B cell (primary cell): ENCODE measurements at regions of chr3 and their contacts with region 1.

Region 1: GRCh38 chr3:186930641-186931531 is 560 bp downstream of the ST6GAL1 start:
- DNase-seq: peak; percentile 89
- ATAC-seq: peak; percentile 84
- H3K4me3 ChIP-seq: peak overlapping the region; percentile 84 to 94 (median 91)
- H3K4me3 Mint-ChIP-seq: peak overlapping the region; percentile 100
- H3K27ac ChIP-seq: peak overlapping the region; percentile 79 to 83
- H3K27ac Mint-ChIP-seq: peak overlapping the region; percentile 98
- H3K4me1 ChIP-seq: peaks cover 26 to 40% of the 10 kb centered on the region in 2 donors
- H3K4me1 Mint-ChIP-seq: peaks cover 58% of the 10 kb centered on the region
- H3K27me3 ChIP-seq: no peaks in the 10 kb centered on the region
- H3K27me3 Mint-ChIP-seq: no peaks in the 10 kb centered on the region
- CTCF ChIP-seq: peak; percentile 47

Region 2: DNA sequence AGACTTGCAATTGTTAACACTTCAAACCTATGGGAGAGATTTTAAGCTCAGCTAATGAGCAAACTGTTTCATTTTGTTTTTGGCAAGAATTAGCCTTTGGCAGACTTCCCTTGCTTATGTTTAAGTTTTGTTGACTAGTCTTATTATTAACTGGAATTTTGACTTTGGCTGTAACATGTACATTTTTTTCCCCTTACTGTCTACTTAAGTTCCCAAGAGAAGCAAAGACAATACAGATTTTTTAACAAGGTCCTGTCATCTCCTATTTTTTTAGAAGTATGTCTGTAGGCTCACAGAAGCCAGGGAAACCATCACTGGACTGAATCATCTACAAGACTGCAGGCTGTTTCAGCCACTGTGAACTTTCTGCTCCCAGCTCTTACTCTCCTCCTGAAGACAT is 643.2 kb before region 1 on chr3:
- CTCF ChIA-PET with region 1: no interaction called
- POLR2A ChIA-PET with region 1: no interaction called
- intact Hi-C with region 1: no loop called
- DNase-seq: no peak
- ATAC-seq: no peak
- H3K4me3 ChIP-seq: no peak overlapping the region
- H3K4me3 Mint-ChIP-seq: no peak overlapping the region
- H3K27ac ChIP-seq: no peak overlapping the region
- H3K27ac Mint-ChIP-seq: no peak overlapping the region
- H3K4me1 ChIP-seq: no peaks in the 10 kb centered on the region
- H3K4me1 Mint-ChIP-seq: no peaks in the 10 kb centered on the region
- H3K27me3 ChIP-seq: no peaks in the 10 kb centered on the region
- H3K27me3 Mint-ChIP-seq: no peaks in the 10 kb centered on the region
- CTCF ChIP-seq: no peak

Region 3: GRCh38 chr3:186760141-186760813 is 170.6 kb before region 1 on chr3:
- CTCF ChIA-PET with region 1: no interaction called
- POLR2A ChIA-PET with region 1: no interaction called
- intact Hi-C with region 1: no loop called
- DNase-seq: no peak
- ATAC-seq: no peak
- H3K4me3 ChIP-seq: no peak overlapping the region
- H3K4me3 Mint-ChIP-seq: no peak overlapping the region
- H3K27ac ChIP-seq: no peak overlapping the region
- H3K27ac Mint-ChIP-seq: no peak overlapping the region
- H3K4me1 ChIP-seq: no peaks in the 10 kb centered on the region
- H3K4me1 Mint-ChIP-seq: no peaks in the 10 kb centered on the region
- H3K27me3 ChIP-seq: no peaks in the 10 kb centered on the region
- H3K27me3 Mint-ChIP-seq: peaks cover 7% of the 10 kb centered on the region
- CTCF ChIP-seq: no peak

Region 4: DNA sequence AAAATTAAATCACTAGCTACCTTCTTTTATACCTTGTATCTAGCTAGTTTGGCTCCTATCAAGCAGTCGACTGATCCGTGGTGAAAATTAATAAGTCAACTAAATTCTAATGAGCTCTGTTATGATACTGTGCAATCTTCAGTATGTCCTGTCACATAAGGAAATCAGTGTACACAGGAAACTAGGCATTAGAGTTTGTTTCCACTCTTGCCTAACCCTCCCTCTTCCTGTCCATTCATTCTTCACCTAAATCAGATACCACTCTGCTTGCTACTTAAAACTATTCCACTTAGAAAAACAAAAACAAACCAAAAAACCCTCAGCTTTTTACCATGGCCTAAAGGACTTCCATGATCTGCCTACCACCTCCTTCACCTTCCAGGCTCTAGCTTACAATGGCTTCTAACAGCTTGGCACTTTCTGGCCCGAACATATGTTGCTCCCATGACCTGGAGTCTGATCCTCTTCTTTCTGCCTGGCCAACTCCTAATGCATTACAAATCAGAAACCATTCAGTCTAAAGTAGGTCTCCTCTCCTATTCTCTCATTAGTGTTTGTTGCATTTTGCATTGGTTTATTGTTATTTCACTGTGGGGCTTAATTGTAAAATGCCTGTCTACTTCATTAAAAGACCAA is 132.5 kb before region 1 on chr3:
- CTCF ChIA-PET with region 1: no interaction called
- POLR2A ChIA-PET with region 1: no interaction called
- intact Hi-C with region 1: no loop called
- DNase-seq: no peak
- ATAC-seq: no peak
- H3K4me3 ChIP-seq: no peak overlapping the region
- H3K4me3 Mint-ChIP-seq: no peak overlapping the region
- H3K27ac ChIP-seq: no peak overlapping the region
- H3K27ac Mint-ChIP-seq: no peak overlapping the region
- H3K4me1 ChIP-seq: no peaks in the 10 kb centered on the region
- H3K4me1 Mint-ChIP-seq: peaks cover 5% of the 10 kb centered on the region
- H3K27me3 ChIP-seq: no peaks in the 10 kb centered on the region
- H3K27me3 Mint-ChIP-seq: no peaks in the 10 kb centered on the region
- CTCF ChIP-seq: no peak

Region 5: DNA sequence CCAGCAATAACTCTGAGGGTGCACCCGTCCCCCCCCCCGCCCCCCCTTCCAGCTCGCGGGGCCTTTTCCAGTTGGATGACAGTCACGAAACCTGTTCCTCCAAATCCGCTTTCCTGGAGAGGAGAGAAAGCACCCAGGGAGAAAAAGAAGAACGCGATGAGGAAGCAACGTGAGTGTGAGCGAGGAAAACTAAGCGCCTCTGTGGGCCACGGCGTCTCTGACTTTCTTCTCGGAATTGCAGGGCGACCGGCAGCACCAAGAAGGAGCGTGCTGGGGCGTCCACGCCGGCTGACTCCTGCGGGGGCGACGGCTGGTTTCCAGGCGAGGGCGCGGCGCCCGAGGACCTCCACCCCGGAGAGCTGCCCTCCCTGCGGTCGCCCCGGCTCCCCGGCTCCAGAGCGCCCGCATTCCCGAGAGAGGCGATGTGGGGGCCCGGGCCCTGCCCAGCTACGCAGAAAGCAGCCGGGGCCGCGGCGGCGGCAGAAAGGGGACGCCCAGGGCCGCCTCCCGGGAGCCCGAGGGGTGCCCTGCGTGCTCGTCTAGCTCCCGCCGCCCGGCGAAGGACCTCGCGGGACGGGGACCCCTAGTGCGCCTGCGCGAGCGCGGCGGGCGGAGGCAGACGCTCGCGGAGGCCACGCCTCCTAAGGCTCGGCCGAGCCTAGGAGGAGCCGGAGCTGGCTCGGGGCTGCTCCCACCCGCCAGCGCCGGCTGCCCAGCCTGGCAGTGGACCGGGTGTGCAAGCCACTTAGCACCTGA is 103.7 kb before region 1 on chr3:
- CTCF ChIA-PET with region 1: interaction called, 5 read pairs
- POLR2A ChIA-PET with region 1: interaction called, 8 read pairs
- intact Hi-C with region 1: loop called (anchors 2 kb)
- DNase-seq: peak; percentile 92
- ATAC-seq: peak; percentile 95
- H3K4me3 ChIP-seq: peak overlapping the region in 4 of 5 experiments; percentile 57 to 78 (median 70)
- H3K4me3 Mint-ChIP-seq: peak overlapping the region; percentile 79
- H3K27ac ChIP-seq: peak overlapping the region in 1 of 2 donors; percentile 55
- H3K27ac Mint-ChIP-seq: peak overlapping the region; percentile 41
- H3K4me1 ChIP-seq: peaks cover 24 to 28% of the 10 kb centered on the region in 2 donors
- H3K4me1 Mint-ChIP-seq: peaks cover 21% of the 10 kb centered on the region
- H3K27me3 ChIP-seq: peaks cover 0 to 69% (median 42%) of the 10 kb centered on the region in 4 experiments
- H3K27me3 Mint-ChIP-seq: peaks cover 54% of the 10 kb centered on the region
- CTCF ChIP-seq: no peak

Region 6: DNA sequence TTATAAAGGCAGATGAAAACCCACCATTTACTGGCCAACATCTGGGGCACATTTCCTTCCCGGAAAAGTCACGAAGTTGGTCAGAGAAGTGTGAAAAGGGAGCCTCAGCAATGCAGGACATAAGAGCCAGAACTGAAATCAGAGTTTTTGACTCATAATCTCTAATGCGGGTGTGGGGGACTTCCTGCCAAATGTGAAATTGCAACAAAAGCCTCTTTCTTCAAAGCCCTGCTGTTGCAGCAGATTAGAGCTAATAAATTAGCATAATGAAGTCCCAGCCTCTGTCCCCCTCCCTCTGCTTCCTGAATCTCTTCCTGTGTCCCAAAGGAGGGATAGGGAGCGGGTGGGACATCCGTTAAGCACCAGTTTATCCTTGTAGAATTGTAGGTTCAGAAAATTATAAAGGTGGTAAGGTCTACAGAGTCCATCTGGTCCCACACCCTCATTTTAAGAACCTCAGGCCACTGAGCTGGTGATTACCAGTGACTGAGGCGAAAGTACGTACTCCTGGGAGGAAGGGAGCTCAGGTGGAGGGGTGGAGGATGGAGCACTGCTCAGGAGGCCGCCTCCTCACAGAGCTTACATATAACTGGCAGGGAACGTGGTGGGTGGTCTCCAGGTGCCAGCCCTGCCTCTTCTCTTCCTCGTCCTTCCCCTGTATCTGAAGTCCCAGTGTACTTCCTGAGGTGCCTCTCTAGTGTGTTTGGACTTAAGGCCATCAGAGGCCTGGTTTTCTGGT is 34.4 kb after region 1 on chr3:
- CTCF ChIA-PET with region 1: interaction called, 5 read pairs
- POLR2A ChIA-PET with region 1: no interaction called
- intact Hi-C with region 1: loop called (anchors 5 kb)
- DNase-seq: no peak
- ATAC-seq: no peak
- H3K4me3 ChIP-seq: no peak overlapping the region
- H3K4me3 Mint-ChIP-seq: no peak overlapping the region
- H3K27ac ChIP-seq: peak overlapping the region in 1 of 2 donors; percentile 9
- H3K27ac Mint-ChIP-seq: peak overlapping the region; percentile 61
- H3K4me1 ChIP-seq: peaks cover 15 to 31% of the 10 kb centered on the region in 2 donors
- H3K4me1 Mint-ChIP-seq: peaks cover 59% of the 10 kb centered on the region
- H3K27me3 ChIP-seq: no peaks in the 10 kb centered on the region
- H3K27me3 Mint-ChIP-seq: no peaks in the 10 kb centered on the region
- CTCF ChIP-seq: no peak

Region 7: GRCh38 chr3:187025656-187026316 is 94.9 kb after region 1 on chr3:
- CTCF ChIA-PET with region 1: interaction called, 12 read pairs
- POLR2A ChIA-PET with region 1: interaction called, 14 read pairs
- intact Hi-C with region 1: no loop called
- DNase-seq: peak; percentile 55
- ATAC-seq: peak; percentile 37
- H3K4me3 ChIP-seq: peak overlapping the region; percentile 19 to 65 (median 42)
- H3K4me3 Mint-ChIP-seq: peak overlapping the region; percentile 89
- H3K27ac ChIP-seq: peak overlapping the region; percentile 86 to 87
- H3K27ac Mint-ChIP-seq: peak overlapping the region; percentile 90
- H3K4me1 ChIP-seq: peaks cover 84 to 92% of the 10 kb centered on the region in 2 donors
- H3K4me1 Mint-ChIP-seq: peaks cover 76% of the 10 kb centered on the region
- H3K27me3 ChIP-seq: no peaks in the 10 kb centered on the region
- H3K27me3 Mint-ChIP-seq: no peaks in the 10 kb centered on the region
- CTCF ChIP-seq: no peak

Region 8: GRCh38 chr3:187112934-187113793 is 182.3 kb after region 1 on chr3:
- CTCF ChIA-PET with region 1: interaction called, 16 read pairs
- POLR2A ChIA-PET with region 1: no interaction called
- intact Hi-C with region 1: no loop called
- DNase-seq: peak; percentile 69
- ATAC-seq: peak; percentile 45
- H3K4me3 ChIP-seq: no peak overlapping the region
- H3K4me3 Mint-ChIP-seq: no peak overlapping the region
- H3K27ac ChIP-seq: no peak overlapping the region
- H3K27ac Mint-ChIP-seq: peak overlapping the region; percentile 42
- H3K4me1 ChIP-seq: peaks cover 3 to 5% of the 10 kb centered on the region in 2 donors
- H3K4me1 Mint-ChIP-seq: peaks cover 6% of the 10 kb centered on the region
- H3K27me3 ChIP-seq: no peaks in the 10 kb centered on the region
- H3K27me3 Mint-ChIP-seq: no peaks in the 10 kb centered on the region
- CTCF ChIP-seq: peak; percentile 88

Region 9: DNA sequence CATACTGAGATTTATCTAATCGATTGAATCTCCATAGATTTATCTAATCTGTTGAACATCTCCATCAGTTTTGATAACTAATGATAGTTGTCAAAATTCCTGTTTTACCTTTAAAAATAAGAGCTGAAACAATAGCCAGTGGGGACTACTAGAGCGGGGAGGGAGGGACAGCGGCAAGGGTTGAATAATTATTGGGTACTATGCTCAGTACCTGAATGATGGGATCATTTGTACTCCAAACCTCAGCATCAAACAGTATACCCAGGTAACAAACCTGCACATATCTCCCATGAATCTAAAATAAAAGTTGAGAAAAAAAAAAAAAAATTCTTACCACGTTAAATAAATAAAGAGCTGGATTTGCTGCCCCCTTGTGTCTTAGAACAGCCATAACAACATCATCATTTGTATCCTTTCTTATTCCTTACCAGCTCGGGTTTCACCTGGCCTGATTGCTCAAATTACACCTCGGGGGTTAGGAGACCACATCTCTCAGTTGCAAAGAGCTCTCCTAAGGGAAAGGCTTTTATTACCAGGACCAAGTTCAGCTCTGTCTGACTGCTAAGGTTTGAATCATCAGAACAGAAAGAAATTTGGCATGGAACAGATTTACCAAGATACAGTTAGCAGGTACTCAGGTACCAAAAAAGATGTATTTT is 234.1 kb after region 1 on chr3:
- CTCF ChIA-PET with region 1: interaction called, 15 read pairs
- POLR2A ChIA-PET with region 1: interaction called, 3 read pairs
- intact Hi-C with region 1: no loop called
- DNase-seq: peak; percentile 81
- ATAC-seq: peak; percentile 72
- H3K4me3 ChIP-seq: no peak overlapping the region
- H3K4me3 Mint-ChIP-seq: no peak overlapping the region
- H3K27ac ChIP-seq: no peak overlapping the region
- H3K27ac Mint-ChIP-seq: no peak overlapping the region
- H3K4me1 ChIP-seq: no peaks in the 10 kb centered on the region
- H3K4me1 Mint-ChIP-seq: no peaks in the 10 kb centered on the region
- H3K27me3 ChIP-seq: peaks cover 0 to 6% (median 0%) of the 10 kb centered on the region in 4 experiments
- H3K27me3 Mint-ChIP-seq: peaks cover 23% of the 10 kb centered on the region
- CTCF ChIP-seq: peak; percentile 81